ENCODE measurements at regions of chr1 and their contacts with region 1.

Region 1: GRCh38 chr1:236103646-236104218 is 38.6 kb upstream of the GPR137B start:
- DNase-seq: peak in 1 of 2 experiments; percentile 68
- H3K4me3 ChIP-seq: peak overlapping the region in 1 of 4 experiments; percentile 41; a peak in 1 of 8 replicates
- H3K27ac ChIP-seq: no peak overlapping the region
- H3K4me1 ChIP-seq: peaks cover 2 to 9% (median 3%) of the 10 kb centered on the region in 4 experiments; a peak in 6 of 7 replicates
- H3K27me3 ChIP-seq: no peaks in the 10 kb centered on the region
- CTCF ChIP-seq: peak; percentile 37 to 76 (median 76)
- EP300 ChIP-seq: no peak
- POLR2A ChIP-seq: no peak
- RAD21 ChIP-seq: peak; percentile 94 to 95

Region 2: DNA sequence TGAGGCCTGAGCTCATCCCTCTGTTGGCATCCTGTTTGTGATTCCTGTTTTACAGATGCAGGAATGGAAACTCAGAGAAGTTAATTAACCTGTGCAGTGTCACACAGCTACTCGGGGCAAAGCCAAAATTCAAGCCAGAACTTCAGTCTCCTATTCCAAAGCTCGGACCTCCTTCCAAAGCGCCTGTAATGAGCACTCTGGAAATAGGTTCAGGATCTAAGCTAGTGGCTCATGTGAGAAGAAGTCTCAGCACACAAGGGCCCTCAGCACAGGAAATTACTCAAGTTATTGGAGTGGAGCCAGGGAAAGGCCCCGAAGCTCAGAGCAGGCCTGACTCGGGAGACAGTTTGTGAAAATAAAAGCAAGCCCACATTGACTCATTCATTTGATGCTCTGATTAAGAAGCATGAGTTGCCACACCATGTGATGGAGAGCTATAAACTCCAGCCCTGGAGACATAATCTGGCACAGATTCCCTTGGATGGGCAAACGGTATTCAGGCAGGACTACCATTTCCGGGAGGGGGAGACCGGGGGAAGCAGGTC is 186.4 kb before region 1 on chr1:
- CTCF ChIA-PET with region 1: no interaction called
- POLR2A ChIA-PET with region 1: no interaction called
- DNase-seq: no peak
- H3K4me3 ChIP-seq: no peak overlapping the region
- H3K27ac ChIP-seq: no peak overlapping the region
- H3K4me1 ChIP-seq: peaks cover 4 to 13% (median 7%) of the 10 kb centered on the region in 4 experiments; a peak in 6 of 7 replicates
- H3K27me3 ChIP-seq: peaks cover 2 to 24% (median 17%) of the 10 kb centered on the region in 4 experiments; a peak in 5 of 7 replicates
- CTCF ChIP-seq: no peak
- EP300 ChIP-seq: no peak
- POLR2A ChIP-seq: no peak
- RAD21 ChIP-seq: no peak

Region 3: GRCh38 chr1:236141305-236141929 is 37.7 kb after region 1 on chr1:
- CTCF ChIA-PET with region 1: interaction called, 21 read pairs
- POLR2A ChIA-PET with region 1: interaction called, 4 read pairs
- DNase-seq: peak in 1 of 2 experiments; percentile 65
- H3K4me3 ChIP-seq: peak overlapping the region; percentile 53 to 93 (median 69)
- H3K27ac ChIP-seq: no peak overlapping the region
- H3K4me1 ChIP-seq: peaks cover 6 to 11% (median 9%) of the 10 kb centered on the region in 4 experiments
- H3K27me3 ChIP-seq: peaks cover 14 to 50% (median 38%) of the 10 kb centered on the region in 4 experiments
- CTCF ChIP-seq: no peak
- EP300 ChIP-seq: no peak
- POLR2A ChIP-seq: no peak
- RAD21 ChIP-seq: no peak

Region 4: DNA sequence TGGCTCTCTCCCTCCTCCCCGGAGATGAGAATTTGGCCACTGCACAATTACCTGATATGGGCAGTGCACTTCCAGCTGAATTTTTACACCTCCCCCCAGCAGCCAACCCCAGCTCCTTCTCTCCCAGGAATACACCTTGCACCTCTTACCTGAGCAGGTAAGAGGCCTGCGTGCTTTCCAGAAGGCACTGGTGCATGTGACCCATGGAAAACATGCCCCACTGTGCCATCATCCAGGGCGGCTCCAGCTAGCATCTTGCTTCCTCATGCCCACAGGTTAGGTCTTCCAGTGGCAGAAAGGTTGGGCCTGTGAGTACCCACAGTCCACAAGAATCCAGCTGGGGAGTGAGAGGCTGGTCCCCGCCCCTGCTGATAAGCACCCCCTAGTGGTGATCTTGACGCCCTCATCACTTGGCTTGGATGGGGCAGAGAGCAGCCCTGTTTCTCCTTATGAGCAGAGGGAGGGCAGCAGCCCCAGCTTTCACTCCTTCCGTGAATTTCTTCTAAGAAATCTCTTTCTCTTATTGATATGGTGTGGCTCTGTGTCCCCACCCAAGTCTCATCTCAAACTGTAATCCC is 348.2 kb after region 1 on chr1:
- CTCF ChIA-PET with region 1: interaction called, 16 read pairs
- POLR2A ChIA-PET with region 1: no interaction called
- DNase-seq: peak; percentile 15 to 77
- H3K4me3 ChIP-seq: no peak overlapping the region
- H3K27ac ChIP-seq: no peak overlapping the region
- H3K4me1 ChIP-seq: no peaks in the 10 kb centered on the region
- H3K27me3 ChIP-seq: peaks cover 0 to 1% (median 0%) of the 10 kb centered on the region in 4 experiments; a peak in 1 of 7 replicates
- CTCF ChIP-seq: peak; percentile 71 to 85 (median 83)
- EP300 ChIP-seq: no peak
- POLR2A ChIP-seq: no peak
- RAD21 ChIP-seq: peak; percentile 58 to 76; a peak in 3 of 4 replicates

Region 5: DNA sequence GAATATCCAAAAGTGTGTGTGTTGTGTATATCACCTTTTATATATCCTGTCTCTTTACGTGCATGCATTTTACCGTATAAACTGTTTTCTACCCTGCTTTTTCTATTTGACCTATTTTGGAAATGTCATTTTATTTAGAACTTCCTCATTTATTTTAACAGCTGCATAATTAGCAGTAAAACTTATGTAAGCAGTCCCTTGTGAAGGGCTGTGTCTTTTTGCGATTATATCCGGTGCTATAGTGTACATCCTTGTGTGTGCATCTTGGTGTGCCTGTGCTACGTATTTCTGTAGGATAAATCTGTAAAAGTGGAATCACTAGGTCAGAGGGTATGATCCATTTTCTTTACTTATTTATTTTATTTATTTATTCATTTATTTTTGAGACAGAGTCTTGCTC is 427.2 kb after region 1 on chr1:
- CTCF ChIA-PET with region 1: interaction called, 21 read pairs
- POLR2A ChIA-PET with region 1: no interaction called
- DNase-seq: no peak
- H3K4me3 ChIP-seq: no peak overlapping the region
- H3K27ac ChIP-seq: no peak overlapping the region
- H3K4me1 ChIP-seq: no peaks in the 10 kb centered on the region
- H3K27me3 ChIP-seq: no peaks in the 10 kb centered on the region
- CTCF ChIP-seq: no peak
- EP300 ChIP-seq: no peak
- POLR2A ChIP-seq: no peak
- RAD21 ChIP-seq: no peak